Sciatic nerve (tissue), 2 donors: ENCODE measurements at regions of chr21 and their contacts with region 1.

Region 1: GRCh38 chr21:34960672-34961071 is 88.4 kb downstream of the RUNX1 start:
- DNase-seq: no peak
- ATAC-seq: no peak

Region 2: DNA sequence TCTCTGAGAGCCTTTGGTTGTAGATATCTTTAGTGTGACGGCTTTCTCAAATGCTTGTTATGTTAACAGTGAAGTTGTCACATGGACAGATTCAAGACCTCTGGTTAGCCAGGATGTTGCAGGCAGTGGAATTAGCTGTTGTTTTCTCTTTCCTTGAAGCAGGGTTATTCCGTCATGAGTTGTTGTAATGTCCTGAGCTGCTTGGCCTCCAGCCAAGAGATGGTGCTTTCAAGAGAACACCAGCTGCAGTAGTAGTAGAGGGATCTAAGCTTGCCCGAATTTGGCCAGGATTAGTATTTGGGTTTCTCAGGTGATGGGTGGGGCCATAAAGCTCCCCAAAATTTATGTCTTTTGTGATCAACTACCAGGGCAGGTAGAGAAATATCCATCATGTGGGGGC is 462.0 kb before region 1 on chr21:
- intact Hi-C with region 1: no loop called
- DNase-seq: no peak
- ATAC-seq: no peak

Region 3: GRCh38 chr21:34782506-34783365 is 177.9 kb before region 1 on chr21:
- intact Hi-C with region 1: no loop called
- DNase-seq: no peak
- ATAC-seq: peak; percentile 17

Region 4: GRCh38 chr21:35159881-35160280 is 199.2 kb after region 1 on chr21:
- intact Hi-C with region 1: no loop called
- DNase-seq: no peak
- ATAC-seq: no peak

Region 5: GRCh38 chr21:35811191-35811806 is 850.6 kb after region 1 on chr21:
- intact Hi-C with region 1: loop called (anchors 2 kb)
- DNase-seq: no peak
- ATAC-seq: no peak